Activated naive CD4-positive, alpha-beta T cell treated with anti-CD3 and anti-CD28 coated beads, Interleukin-2, amount 10 ng/mL, durations not matched to agents 7 days and 5 days (primary cell): ENCODE measurements at regions of chr20 and their contacts with region 1.

Region 1: GRCh38 chr20:21048841-21049273 is 57.3 kb downstream of the LINC00237 start:
- DNase-seq: peak; percentile 66
- H3K4me3 Mint-ChIP-seq: no peak overlapping the region
- H3K27ac Mint-ChIP-seq: no peak overlapping the region
- H3K4me1 Mint-ChIP-seq: no peaks in the 10 kb centered on the region
- H3K27me3 Mint-ChIP-seq: peaks cover 26% of the 10 kb centered on the region

Region 2: GRCh38 chr20:21505161-21505809 is 456.4 kb after region 1 on chr20:
- CTCF ChIA-PET with region 1: interaction called, 10 read pairs
- DNase-seq: peak; percentile 80
- H3K4me3 Mint-ChIP-seq: peak overlapping the region; percentile 47
- H3K27ac Mint-ChIP-seq: peak overlapping the region; percentile 49
- H3K4me1 Mint-ChIP-seq: peaks cover 29% of the 10 kb centered on the region
- H3K27me3 Mint-ChIP-seq: peaks cover 82% of the 10 kb centered on the region